MCF 10A (cell line): ENCODE measurements at regions of chr3 and their contacts with region 1.

Region 1: DNA sequence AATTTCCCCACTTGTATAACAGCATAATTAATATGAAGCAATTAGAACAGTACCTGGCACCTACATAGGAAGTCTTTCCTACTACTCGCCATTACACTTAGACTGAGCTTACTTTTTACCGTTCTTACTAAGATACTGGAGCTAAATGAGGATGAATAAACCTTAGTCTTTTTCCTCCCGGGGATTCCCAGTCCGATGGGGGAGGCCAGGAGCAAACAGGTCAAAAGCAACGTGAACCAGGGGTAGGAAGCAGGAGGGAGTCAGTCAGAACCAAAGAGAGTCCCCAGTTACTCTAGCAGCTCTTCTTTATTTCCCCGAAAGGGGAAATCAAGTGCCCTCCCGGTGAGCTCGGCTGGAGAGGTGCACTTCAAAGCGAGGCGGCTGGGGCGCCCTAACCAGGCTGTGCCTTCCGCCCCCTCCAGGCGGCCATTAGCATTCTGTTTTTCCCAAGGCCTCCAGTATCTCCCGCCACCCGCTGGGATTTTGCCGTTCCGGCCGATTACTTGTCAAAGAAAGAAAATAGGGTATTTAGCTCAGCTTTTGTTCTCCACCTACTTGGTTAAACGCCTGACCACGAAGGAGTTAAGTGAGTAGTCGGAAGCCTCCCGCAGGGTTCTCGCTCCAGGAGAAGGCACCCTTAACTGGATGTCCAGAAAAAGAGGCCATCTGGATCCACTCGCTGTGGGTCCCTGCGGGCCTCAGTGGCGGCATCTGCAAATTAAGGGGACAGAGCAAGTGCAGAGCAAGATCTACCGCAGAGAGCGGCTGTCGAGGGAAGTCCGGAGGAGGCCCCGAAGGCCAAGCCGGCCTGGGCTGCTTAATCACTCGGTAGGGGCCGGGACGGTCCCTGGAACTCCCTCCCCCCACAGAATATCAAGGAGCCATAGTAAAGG is 6.3 kb upstream of the EOMES start:
- DNase-seq: no peak
- H3K4me3 Mint-ChIP-seq: peak overlapping the region; percentile 33
- H3K27ac Mint-ChIP-seq: no peak overlapping the region
- H3K4me1 Mint-ChIP-seq: no peaks in the 10 kb centered on the region
- H3K27me3 Mint-ChIP-seq: no peaks in the 10 kb centered on the region
- CTCF ChIP-seq: no peak

Region 2: DNA sequence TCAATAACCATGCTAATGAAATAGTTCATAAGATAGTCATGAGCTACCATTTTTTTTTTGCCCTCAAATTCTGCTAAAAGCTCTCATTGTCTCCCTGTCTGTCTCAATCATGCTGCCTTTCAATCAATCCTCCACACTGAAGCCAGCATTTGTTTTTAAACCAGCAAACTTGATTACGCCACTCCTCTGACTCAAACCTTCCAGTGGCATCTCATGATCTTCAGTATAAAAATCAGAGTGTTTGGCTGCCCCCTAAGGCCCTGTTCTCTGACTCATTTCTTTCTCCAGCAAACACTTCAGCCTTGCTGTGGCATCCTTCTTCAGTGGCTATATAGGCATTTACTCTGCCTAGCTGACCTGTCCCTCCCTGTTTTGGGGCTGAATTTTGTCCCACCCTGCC is 29.6 kb after region 1 on chr3:
- CTCF ChIA-PET with region 1: interaction called, 3 read pairs
- POLR2A ChIA-PET with region 1: interaction called, 10 read pairs
- intact Hi-C with region 1: no loop called
- DNase-seq: peak; percentile 97
- H3K4me3 Mint-ChIP-seq: peak overlapping the region; percentile 17
- H3K27ac Mint-ChIP-seq: peak overlapping the region; percentile 61
- H3K4me1 Mint-ChIP-seq: peaks cover 35% of the 10 kb centered on the region
- H3K27me3 Mint-ChIP-seq: no peaks in the 10 kb centered on the region
- CTCF ChIP-seq: no peak